ENCODE measurements at regions of chr11 and their contacts with region 1.

Region 1: GRCh38 chr11:74004759-74005615 is 3.9 kb downstream of the UCP3 start:
- DNase-seq: peak; percentile 96
- H3K4me3 Mint-ChIP-seq: peak overlapping the region; percentile 73
- H3K27ac Mint-ChIP-seq: peak overlapping the region; percentile 96
- H3K4me1 Mint-ChIP-seq: peaks cover 67% of the 10 kb centered on the region
- H3K27me3 Mint-ChIP-seq: no peaks in the 10 kb centered on the region

Region 2: DNA sequence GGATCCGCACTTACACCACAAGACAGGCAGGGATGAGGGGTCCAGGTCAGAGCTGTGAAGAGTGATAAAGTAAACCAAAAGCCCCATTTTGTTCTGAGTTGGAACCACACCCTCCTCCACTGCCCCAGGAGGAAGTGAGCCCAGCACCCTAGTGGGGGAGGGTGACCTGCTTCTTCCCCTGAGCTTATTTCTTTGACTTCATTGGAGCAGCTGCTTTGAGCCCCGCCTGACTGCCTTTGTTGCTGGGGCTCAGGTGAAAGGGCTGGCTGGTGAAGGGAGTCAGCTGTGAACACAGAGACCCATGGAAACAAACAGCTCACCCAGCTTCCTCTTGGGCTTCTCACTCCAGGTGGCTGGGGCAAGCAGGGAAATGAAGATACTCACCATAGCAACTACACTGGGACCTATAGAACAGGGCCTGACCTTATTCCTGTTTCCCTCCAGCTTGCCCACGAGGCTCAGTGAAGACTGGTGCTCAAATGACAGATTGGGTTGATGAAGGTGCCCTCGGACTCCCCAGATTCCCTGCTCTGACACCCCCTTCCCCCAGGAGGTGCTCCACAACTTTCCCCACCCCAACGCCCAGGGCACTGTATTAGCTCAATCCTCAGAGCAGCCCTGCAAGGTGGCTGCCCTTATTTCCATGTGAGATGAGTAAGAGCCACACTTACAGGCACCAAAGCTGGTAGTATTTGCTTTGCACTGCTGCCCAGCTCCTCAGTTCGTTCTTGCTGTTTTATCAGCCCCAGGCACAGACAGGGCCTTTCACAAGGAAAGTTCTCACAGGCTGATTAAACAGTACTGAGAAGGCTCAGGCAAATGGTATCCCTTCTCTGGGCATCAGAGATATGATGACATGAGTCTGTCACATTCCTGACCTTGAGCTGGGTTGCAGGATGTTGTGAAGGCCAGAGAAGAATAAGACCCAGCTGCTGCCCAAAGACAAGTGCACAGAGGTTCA is 24.7 kb before region 1 on chr11:
- intact Hi-C with region 1: no loop called
- DNase-seq: peak; percentile 95
- H3K4me3 Mint-ChIP-seq: peak overlapping the region; percentile 95
- H3K27ac Mint-ChIP-seq: peak overlapping the region; percentile 96
- H3K4me1 Mint-ChIP-seq: peaks cover 68% of the 10 kb centered on the region
- H3K27me3 Mint-ChIP-seq: no peaks in the 10 kb centered on the region

Region 3: GRCh38 chr11:74018331-74019005 is 13.5 kb after region 1 on chr11:
- intact Hi-C with region 1: loop called (anchors 2 kb)
- DNase-seq: peak; percentile 58
- H3K4me3 Mint-ChIP-seq: peak overlapping the region; percentile 21
- H3K27ac Mint-ChIP-seq: no peak overlapping the region
- H3K4me1 Mint-ChIP-seq: peaks cover 42% of the 10 kb centered on the region
- H3K27me3 Mint-ChIP-seq: no peaks in the 10 kb centered on the region